Astrocyte of the cerebellum (primary cell): ENCODE measurements at regions of chr2 and their contacts with region 1.

Region 1: DNA sequence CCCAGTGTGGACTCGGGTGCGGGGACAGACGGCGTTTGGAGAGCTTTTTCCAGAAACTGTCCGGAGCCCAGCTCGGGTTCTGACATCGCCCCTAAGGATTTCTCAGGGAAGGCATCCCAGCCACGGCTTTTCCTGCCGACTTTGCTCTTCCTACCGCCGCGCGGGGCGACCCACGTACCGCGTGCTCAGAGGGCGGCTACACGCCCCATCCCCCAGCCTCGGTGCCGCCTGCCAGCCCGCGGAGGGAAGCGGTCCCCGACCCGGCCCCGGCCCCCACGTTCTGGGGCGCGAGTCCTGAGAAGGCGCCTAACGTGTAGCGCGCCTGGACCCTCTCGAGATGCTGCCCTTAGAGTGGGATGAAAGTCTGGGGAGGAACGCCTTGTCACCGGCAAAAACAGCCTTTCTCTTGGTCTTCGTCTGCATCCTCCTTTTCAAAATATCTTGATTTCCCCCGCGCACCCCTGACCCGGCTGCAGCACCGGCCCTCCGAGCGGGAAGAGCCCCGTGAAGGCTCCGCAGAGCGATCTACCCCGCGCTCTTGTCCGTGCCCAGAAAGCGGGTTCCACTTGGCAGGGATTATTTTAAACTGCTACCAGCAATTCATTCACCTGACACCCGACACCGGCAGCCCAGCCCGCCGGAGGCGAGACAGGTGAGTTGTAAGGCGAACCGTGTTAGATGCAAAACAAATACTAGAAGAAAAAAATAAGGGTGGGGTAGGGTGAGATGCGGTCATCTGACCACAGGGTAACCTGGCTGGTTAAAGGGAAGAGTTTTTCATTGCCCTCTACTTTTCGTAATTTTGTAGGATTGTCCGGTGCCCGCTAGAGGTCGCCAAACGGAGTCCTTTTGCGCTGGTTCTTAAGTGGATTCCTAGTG is 812 bp upstream of the KCNG3 start:
- DNase-seq: peak; percentile 66
- H3K4me3 ChIP-seq: peak overlapping the region; percentile 48
- CTCF ChIP-seq: peak; percentile 91

Region 2: DNA sequence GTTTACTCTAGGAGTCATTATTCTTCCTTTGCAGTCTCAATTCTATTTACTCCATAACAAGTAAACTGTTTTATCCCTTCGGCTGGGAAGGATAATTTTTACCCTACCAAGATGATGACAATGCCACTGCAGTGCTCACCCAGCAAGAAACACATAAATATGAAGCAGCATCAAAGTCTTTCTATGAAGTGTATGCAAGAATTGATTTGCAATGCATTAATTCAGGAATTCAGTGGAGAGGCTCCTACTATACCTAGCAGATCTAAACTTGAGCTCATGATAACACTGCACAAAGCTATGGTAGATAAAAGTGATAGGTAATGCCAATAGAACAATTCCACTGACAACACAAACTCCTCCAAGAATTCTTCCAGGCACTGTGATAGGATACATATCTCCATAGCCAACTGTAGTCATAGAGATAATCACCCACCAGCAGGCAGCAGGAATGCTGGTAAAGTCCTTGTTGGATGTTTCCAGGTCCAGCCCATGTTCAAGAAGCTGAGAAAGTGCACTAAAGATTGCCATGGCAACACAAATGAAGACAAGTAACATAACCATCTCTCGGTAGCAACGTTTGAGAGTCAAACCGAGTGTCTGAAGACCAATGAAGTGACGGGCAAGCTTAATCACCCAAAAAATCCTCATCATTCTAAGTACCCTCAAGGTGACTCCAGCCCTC is 50.7 kb before region 1 on chr2:
- in situ Hi-C with region 1: loop called (anchors 5 kb)
- DNase-seq: no peak
- H3K4me3 ChIP-seq: no peak overlapping the region
- CTCF ChIP-seq: no peak

Region 3: GRCh38 chr2:42663106-42663780 is 168.6 kb after region 1 on chr2:
- in situ Hi-C with region 1: loop called (anchors 5 kb)
- DNase-seq: peak; percentile 67
- H3K4me3 ChIP-seq: no peak overlapping the region
- CTCF ChIP-seq: peak; percentile 100